Activated naive CD4-positive, alpha-beta T cell treated with anti-CD3 and anti-CD28 coated beads, Interleukin-2, amount 10 ng/mL, durations not matched to agents 7 days and 5 days (primary cell): ENCODE measurements at regions of chr1 and their contacts with region 1.

Region 1: GRCh38 chr1:228457396-228458176 is 29.6 kb upstream of the RNF187 start:
- DNase-seq: peak; percentile 92
- H3K4me3 Mint-ChIP-seq: peak overlapping the region; percentile 89
- H3K27ac Mint-ChIP-seq: peak overlapping the region; percentile 99
- H3K4me1 Mint-ChIP-seq: peaks cover 65% of the 10 kb centered on the region
- H3K27me3 Mint-ChIP-seq: peaks cover 9% of the 10 kb centered on the region

Region 2: GRCh38 chr1:228198977-228199590 is 258.5 kb before region 1 on chr1:
- CTCF ChIA-PET with region 1: no interaction called
- DNase-seq: no peak
- H3K4me3 Mint-ChIP-seq: no peak overlapping the region
- H3K27ac Mint-ChIP-seq: no peak overlapping the region
- H3K4me1 Mint-ChIP-seq: no peaks in the 10 kb centered on the region
- H3K27me3 Mint-ChIP-seq: peaks cover 6% of the 10 kb centered on the region

Region 3: GRCh38 chr1:228405987-228406265 is 51.7 kb before region 1 on chr1:
- CTCF ChIA-PET with region 1: interaction called, 15 read pairs
- DNase-seq: no peak
- H3K4me3 Mint-ChIP-seq: peak overlapping the region; percentile 96
- H3K27ac Mint-ChIP-seq: peak overlapping the region; percentile 90
- H3K4me1 Mint-ChIP-seq: peaks cover 59% of the 10 kb centered on the region
- H3K27me3 Mint-ChIP-seq: peaks cover 6% of the 10 kb centered on the region